ENCODE measurements at regions of chr1 and their contacts with region 1.

Region 1: GRCh38 chr1:44283524-44284173 is 70.4 kb downstream of the DMAP1 start:
- DNase-seq: peak; percentile 78
- ATAC-seq: peak; percentile 98
- H3K4me3 ChIP-seq: no peak overlapping the region
- H3K27ac ChIP-seq: peak overlapping the region; percentile 72
- H3K4me1 ChIP-seq: peaks cover 18% of the 10 kb centered on the region
- H3K27me3 ChIP-seq: no peaks in the 10 kb centered on the region
- CTCF ChIP-seq: no peak

Region 2: DNA sequence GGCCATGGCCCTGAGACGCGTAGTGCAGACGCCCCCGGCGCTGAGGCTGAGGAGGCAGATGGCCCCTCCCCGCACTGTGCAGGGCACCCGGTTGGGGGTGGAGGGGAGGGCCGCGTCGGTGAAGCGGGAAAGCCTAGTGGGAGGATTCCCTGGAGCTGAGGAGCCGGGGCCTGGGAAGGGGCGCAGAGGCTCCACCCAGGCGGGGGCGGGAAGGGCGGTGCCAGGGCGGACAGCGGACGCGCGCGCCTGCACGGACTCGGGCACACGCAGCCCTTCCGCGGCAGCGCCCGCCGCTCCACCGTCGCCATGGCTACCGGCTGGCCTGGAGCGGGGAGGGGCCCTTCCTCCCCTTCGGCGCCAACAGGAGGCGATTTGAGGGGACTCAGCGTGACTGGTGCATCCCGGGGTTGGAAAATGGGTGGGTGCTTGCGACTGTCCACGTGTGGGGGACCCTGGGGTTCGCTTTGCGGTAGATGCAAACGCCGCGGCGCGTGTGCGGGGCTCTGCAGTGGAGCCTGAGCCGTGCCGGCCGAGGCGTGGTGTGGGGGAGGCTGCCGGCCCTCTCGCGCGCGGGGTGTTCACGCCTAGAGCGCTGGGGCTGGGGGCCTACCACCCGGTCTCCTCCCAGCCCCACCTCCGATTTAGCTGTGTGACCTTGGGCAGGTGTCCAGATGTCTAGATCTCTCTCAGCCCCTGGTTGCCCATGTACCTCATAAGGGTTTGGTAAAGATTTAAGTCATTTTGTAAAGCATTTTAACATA is 717.9 kb before region 1 on chr1:
- CTCF ChIA-PET with region 1: no interaction called
- POLR2A ChIA-PET with region 1: no interaction called
- intact Hi-C with region 1: no loop called
- DNase-seq: no peak
- ATAC-seq: no peak
- H3K4me3 ChIP-seq: no peak overlapping the region
- H3K27ac ChIP-seq: no peak overlapping the region
- H3K4me1 ChIP-seq: no peaks in the 10 kb centered on the region
- H3K27me3 ChIP-seq: no peaks in the 10 kb centered on the region
- CTCF ChIP-seq: no peak

Region 3: GRCh38 chr1:44029906-44030604 is 253.6 kb before region 1 on chr1:
- CTCF ChIA-PET with region 1: no interaction called
- POLR2A ChIA-PET with region 1: no interaction called
- intact Hi-C with region 1: no loop called
- DNase-seq: peak; percentile 92
- ATAC-seq: peak; percentile 62
- H3K4me3 ChIP-seq: peak overlapping the region; percentile 91
- H3K27ac ChIP-seq: peak overlapping the region; percentile 98
- H3K4me1 ChIP-seq: peaks cover 54% of the 10 kb centered on the region
- H3K27me3 ChIP-seq: no peaks in the 10 kb centered on the region
- CTCF ChIP-seq: no peak

Region 4: GRCh38 chr1:44239961-44240371 is 43.7 kb before region 1 on chr1:
- CTCF ChIA-PET with region 1: no interaction called
- POLR2A ChIA-PET with region 1: no interaction called
- intact Hi-C with region 1: loop called (anchors 2 kb)
- DNase-seq: no peak
- ATAC-seq: no peak
- H3K4me3 ChIP-seq: no peak overlapping the region
- H3K27ac ChIP-seq: no peak overlapping the region
- H3K4me1 ChIP-seq: no peaks in the 10 kb centered on the region
- H3K27me3 ChIP-seq: no peaks in the 10 kb centered on the region
- CTCF ChIP-seq: no peak

Region 5: DNA sequence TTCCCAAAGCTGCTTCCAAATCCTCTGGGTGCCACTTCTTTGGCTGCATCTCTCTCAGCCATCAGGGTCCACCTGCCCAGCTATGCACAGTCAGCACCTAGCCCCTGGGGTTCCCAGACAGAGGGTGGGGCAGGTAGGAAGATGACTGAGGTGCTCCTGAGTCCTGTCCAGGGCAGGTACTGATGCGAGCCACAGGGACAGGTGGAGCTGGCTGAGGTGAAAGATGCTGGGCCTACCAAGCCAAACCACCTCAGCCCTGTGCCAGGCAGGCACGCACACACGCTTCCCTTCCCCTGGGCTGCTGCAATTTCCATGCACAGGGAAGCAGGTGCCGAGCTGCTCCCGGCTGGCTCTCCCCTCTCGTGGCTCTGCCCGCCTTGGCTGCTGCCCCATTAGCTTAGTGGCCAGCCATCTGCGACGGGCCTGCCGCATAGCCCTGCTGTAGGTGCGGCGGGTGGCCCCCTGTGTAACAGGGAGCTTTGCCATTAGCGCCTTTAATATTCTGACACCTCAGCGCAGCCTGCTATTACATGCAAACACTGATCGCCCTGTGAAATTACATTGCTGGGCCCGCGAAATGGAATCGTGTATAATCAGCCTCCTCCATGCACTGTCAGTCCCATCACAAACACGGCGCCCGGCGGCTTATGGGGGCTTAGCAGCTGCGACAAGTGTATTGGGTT is 31.5 kb before region 1 on chr1:
- CTCF ChIA-PET with region 1: no interaction called
- POLR2A ChIA-PET with region 1: no interaction called
- intact Hi-C with region 1: no loop called
- DNase-seq: no peak
- ATAC-seq: no peak
- H3K4me3 ChIP-seq: no peak overlapping the region
- H3K27ac ChIP-seq: no peak overlapping the region
- H3K4me1 ChIP-seq: no peaks in the 10 kb centered on the region
- H3K27me3 ChIP-seq: no peaks in the 10 kb centered on the region
- CTCF ChIP-seq: no peak

Region 6: DNA sequence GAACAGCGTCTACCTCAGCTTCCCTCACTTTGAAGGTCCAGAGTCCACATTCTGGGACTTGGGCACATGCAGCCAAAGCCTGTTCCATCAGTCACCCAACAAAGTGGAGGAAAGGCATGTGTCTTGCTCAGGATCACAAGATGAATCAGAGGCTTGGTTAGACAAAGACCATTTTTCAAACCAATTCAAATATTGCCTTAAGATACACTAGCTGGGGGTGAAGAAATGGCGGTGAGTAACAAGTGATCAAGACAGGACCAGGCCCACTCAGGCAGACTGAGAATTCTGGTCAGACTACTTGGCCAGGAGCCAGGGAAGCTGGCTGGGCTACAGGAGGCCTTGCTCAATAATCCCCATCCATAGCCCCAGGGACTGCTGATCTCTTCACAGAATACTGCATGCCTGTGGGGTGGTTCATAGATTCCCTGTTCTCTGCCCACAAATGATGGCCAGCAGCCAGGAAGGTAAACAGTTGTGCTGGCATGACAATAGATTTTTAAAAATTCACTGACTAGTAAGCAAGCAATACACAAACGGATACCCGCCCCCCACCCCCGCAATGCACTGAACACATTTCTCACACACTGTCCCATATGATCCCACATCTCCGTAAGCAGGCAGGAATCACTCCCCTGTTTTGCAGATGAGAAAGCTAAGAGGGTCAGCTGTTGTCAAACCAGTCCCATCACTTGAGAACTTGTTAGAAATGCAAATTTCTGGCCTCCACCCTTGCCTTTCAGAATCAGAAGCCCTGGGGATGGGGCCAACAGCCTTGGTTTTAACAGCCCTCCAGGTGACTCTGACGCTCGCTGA is 44.2 kb after region 1 on chr1:
- CTCF ChIA-PET with region 1: no interaction called
- POLR2A ChIA-PET with region 1: no interaction called
- intact Hi-C with region 1: loop called (anchors 5 kb)
- DNase-seq: peak; percentile 99
- ATAC-seq: peak; percentile 94
- H3K4me3 ChIP-seq: peak overlapping the region; percentile 23; the same call in 1 of the 2 replicates
- H3K27ac ChIP-seq: peak overlapping the region; percentile 91
- H3K4me1 ChIP-seq: peaks cover 41% of the 10 kb centered on the region
- H3K27me3 ChIP-seq: no peaks in the 10 kb centered on the region
- CTCF ChIP-seq: no peak

Region 7: GRCh38 chr1:44500181-44501046 is 216.8 kb after region 1 on chr1:
- CTCF ChIA-PET with region 1: no interaction called
- POLR2A ChIA-PET with region 1: no interaction called
- intact Hi-C with region 1: no loop called
- DNase-seq: peak; percentile 23
- ATAC-seq: peak; percentile 50; the same call in 1 of the 2 replicates
- H3K4me3 ChIP-seq: no peak overlapping the region
- H3K27ac ChIP-seq: no peak overlapping the region
- H3K4me1 ChIP-seq: no peaks in the 10 kb centered on the region
- H3K27me3 ChIP-seq: 0 out of 2 replicates have a peak, but pooled peaks cover 3% of the 10 kb centered on the region
- CTCF ChIP-seq: peak; percentile 46

Measured in PC-3 (cell line).